Activated CD4-positive, alpha-beta T cell treated with anti-CD3 and anti-CD28 coated beads for 36 hours (primary cell): ENCODE measurements at regions of chr3 and their contacts with region 1.

Region 1: GRCh38 chr3:31132132-31132769 is 237.8 kb upstream of the GADL1 start:
- DNase-seq: no peak
- ATAC-seq: peak; percentile 58
- H3K4me3 Mint-ChIP-seq: no peak overlapping the region
- H3K27ac Mint-ChIP-seq: no peak overlapping the region
- H3K4me1 Mint-ChIP-seq: no peaks in the 10 kb centered on the region
- H3K27me3 Mint-ChIP-seq: no peaks in the 10 kb centered on the region

Region 2: GRCh38 chr3:30042274-30042859 is 1089.9 kb before region 1 on chr3:
- CTCF ChIA-PET with region 1: interaction called, 5 read pairs
- POLR2A ChIA-PET with region 1: no interaction called
- intact Hi-C with region 1: loop called in 1 of 2 experiments (anchors 1 kb)
- DNase-seq: peak; percentile 75
- ATAC-seq: no peak
- H3K4me3 Mint-ChIP-seq: no peak overlapping the region
- H3K27ac Mint-ChIP-seq: no peak overlapping the region
- H3K4me1 Mint-ChIP-seq: peaks cover 3% of the 10 kb centered on the region
- H3K27me3 Mint-ChIP-seq: peaks cover 13% of the 10 kb centered on the region

Region 3: DNA sequence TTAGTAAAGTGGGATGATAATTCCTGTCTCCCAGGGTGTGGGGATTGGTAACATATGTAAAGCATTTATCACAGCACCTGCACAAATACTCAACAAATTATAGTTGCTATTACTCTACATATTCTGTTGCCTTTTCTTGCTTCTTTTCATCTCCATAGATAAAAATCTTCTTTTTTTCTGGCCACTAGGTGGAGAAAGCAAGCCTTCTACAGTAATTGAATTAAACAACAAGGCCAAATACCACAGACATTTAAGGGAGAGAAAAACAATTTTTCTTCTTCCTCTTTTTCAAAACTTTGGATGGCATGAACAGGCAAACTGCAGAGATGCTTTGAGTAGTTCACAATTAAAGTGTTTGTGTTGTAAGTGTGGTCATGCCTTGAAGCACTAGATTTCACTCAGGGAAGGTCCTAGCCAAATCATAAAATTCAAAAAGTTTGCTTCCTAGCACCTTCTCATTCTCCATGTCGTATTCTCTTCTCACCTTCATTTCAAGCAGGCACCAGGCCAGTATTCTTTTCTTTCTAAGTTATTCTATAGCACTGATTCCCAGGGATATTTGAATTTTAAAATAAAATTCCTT is 1019.3 kb before region 1 on chr3:
- CTCF ChIA-PET with region 1: no interaction called
- POLR2A ChIA-PET with region 1: no interaction called
- intact Hi-C with region 1: loop called in 1 of 2 experiments (anchors 5 kb)
- DNase-seq: no peak
- ATAC-seq: peak; percentile 19
- H3K4me3 Mint-ChIP-seq: no peak overlapping the region
- H3K27ac Mint-ChIP-seq: no peak overlapping the region
- H3K4me1 Mint-ChIP-seq: peaks cover 6% of the 10 kb centered on the region
- H3K27me3 Mint-ChIP-seq: no peaks in the 10 kb centered on the region

Region 4: DNA sequence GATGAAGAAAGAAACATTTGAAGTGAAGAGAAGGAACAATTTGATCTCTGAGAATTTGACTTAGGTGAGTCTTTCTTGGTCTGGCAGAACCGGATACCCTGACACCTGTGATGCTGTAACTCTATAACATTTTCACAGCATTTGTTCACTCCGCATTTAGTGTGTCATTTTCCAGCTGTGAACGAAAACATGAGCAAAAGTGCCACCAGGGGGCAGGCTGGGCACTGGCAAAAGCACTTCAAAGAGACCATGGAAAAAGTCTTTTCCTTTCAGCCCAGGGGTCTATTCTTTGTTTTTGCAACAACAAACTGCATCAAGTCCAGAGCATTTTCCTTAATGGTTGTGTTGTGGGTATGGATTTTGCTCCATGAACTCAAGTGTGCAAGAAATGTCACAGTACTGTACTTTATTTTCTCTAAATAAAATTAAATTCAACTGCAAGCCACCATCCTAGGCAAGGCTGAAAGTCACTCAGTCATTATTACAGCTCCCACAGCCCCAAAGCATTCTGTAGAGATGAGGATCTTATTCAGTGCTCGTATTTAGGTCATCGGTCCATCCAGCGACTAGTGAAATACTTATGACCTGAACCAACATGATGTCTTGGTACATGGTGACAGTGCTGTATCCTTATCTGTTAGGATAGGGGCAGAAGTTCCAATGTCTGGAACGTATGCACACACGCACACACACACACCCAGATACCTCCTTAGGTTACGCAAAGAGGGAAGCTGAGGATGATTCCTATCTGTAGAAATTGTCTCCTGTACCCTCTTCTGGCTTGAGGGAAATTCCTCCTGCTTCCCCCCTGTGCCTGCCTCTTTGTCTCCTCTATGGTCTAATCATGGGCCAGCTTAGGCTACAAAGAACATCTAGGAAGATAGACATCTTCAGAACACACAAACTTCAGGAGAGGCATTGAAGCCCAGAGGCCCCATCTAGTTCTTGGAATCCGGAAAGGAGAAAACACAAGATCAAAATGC is 363.3 kb before region 1 on chr3:
- CTCF ChIA-PET with region 1: interaction called, 23 read pairs
- POLR2A ChIA-PET with region 1: no interaction called
- intact Hi-C with region 1: loop called (anchors 1 kb)
- DNase-seq: peak; percentile 86
- ATAC-seq: peak; percentile 55
- H3K4me3 Mint-ChIP-seq: no peak overlapping the region
- H3K27ac Mint-ChIP-seq: no peak overlapping the region
- H3K4me1 Mint-ChIP-seq: no peaks in the 10 kb centered on the region
- H3K27me3 Mint-ChIP-seq: peaks cover 2% of the 10 kb centered on the region

Region 5: DNA sequence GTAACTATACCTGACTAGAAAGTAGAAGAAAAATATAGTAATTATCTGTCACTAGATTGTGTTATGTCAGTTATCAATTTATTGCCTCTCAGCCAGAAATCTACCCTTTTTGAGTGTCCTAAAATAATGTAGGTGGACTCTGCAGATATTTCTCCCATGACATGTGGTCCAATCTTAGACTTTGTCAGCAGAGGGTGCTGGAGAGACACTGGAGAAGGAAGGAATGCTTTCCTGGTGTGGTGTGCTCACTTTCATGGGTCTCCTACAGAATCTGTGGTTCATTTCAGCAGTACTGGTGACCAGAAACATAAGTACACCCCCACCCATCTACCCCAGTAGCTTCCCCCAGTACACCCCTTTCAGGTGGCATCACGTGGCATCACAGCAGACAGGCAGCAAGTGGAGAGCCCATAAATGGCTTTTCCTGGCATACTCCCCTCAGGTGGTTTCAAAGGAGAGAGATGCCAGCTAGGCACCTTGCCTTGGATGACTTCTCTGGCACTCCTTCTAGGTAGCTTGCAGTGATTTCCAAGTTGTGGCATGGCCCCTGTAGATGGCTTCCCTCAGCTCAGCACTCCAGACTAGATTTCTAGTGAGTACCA is 352.5 kb before region 1 on chr3:
- CTCF ChIA-PET with region 1: interaction called, 6 read pairs
- POLR2A ChIA-PET with region 1: no interaction called
- intact Hi-C with region 1: loop called in 1 of 2 experiments (anchors 1 kb)
- DNase-seq: peak; percentile 29
- ATAC-seq: peak; percentile 36
- H3K4me3 Mint-ChIP-seq: no peak overlapping the region
- H3K27ac Mint-ChIP-seq: no peak overlapping the region
- H3K4me1 Mint-ChIP-seq: no peaks in the 10 kb centered on the region
- H3K27me3 Mint-ChIP-seq: peaks cover 10% of the 10 kb centered on the region

Region 6: GRCh38 chr3:30934208-30934550 is 198.1 kb before region 1 on chr3:
- CTCF ChIA-PET with region 1: no interaction called
- POLR2A ChIA-PET with region 1: no interaction called
- intact Hi-C with region 1: loop called (anchors 2 to 10 kb)
- DNase-seq: peak; percentile 10
- ATAC-seq: no peak
- H3K4me3 Mint-ChIP-seq: no peak overlapping the region
- H3K27ac Mint-ChIP-seq: no peak overlapping the region
- H3K4me1 Mint-ChIP-seq: peaks cover 8% of the 10 kb centered on the region
- H3K27me3 Mint-ChIP-seq: no peaks in the 10 kb centered on the region

Region 7: DNA sequence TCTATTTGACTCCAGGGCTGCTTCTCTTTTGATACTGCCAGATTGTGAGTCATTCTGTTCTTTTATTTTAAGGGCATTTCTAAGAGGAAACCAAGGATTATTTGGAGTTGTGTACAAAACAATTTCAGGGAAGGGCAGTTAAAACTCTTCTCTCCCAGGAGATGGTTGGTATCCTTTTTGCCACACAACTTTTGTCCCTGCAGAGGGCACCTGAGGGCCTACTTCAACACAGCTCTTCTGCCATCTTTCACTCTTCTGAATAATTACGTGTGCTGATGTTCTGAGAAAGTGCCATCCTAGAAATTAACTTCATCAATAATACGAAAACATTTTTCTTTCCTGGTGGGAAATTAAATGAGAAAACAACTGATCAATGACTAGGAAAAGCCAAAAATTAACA is 162.1 kb before region 1 on chr3:
- CTCF ChIA-PET with region 1: no interaction called
- POLR2A ChIA-PET with region 1: no interaction called
- intact Hi-C with region 1: loop called in 1 of 2 experiments (anchors 5 kb)
- DNase-seq: peak; percentile 15
- ATAC-seq: no peak
- H3K4me3 Mint-ChIP-seq: no peak overlapping the region
- H3K27ac Mint-ChIP-seq: no peak overlapping the region
- H3K4me1 Mint-ChIP-seq: no peaks in the 10 kb centered on the region
- H3K27me3 Mint-ChIP-seq: peaks cover under 1% of the 10 kb centered on the region

Region 8: GRCh38 chr3:31661993-31662686 is 529.9 kb after region 1 on chr3:
- CTCF ChIA-PET with region 1: no interaction called
- POLR2A ChIA-PET with region 1: no interaction called
- intact Hi-C with region 1: no loop called
- DNase-seq: no peak
- ATAC-seq: no peak
- H3K4me3 Mint-ChIP-seq: no peak overlapping the region
- H3K27ac Mint-ChIP-seq: no peak overlapping the region
- H3K4me1 Mint-ChIP-seq: no peaks in the 10 kb centered on the region
- H3K27me3 Mint-ChIP-seq: no peaks in the 10 kb centered on the region